Left ventricle myocardium superior (tissue), 1 donor: ENCODE measurements at regions of chr17 and their contacts with region 1.

Region 1: DNA sequence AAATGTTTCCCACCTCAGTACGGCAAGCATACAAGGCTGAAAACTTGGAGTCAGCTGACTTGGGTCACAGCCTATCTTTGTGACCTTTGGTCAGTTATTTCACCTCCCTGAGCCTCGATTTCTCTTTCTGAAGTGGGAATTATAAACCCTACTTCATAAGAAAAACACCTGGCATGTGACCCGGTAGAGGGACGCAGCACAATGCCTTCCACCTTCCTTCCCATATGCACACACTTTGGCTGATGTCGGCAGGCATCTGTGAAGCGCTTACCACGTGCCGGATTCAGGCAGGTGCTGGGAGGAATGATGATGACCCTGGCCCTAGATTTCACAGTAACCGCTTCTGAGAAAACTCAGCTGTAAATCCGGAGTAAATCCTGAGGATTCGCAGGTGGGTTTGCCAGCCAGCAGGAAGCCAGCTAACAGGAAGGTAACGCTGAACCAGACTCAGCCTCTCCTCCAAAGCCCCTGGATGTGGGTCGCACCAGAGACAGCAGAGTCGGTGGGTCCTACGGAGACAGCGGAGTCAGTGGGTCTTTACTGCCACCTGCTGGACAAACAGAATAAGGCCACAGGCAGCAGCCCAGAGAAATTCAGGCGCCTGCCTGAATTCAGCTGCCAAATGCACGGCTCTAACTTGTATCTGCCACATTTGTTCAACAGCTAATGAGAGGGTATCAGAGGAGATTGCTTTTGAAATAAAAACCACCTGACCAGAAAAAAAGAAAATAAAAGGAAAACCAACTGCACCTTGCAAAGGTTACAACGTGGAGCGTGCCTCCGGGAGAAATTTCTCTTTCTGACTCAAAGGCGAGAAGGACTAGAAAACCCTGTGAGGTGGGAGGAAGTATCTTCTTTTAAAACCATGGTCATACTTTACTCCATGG is 16.6 kb downstream of the COPRS start:
- DNase-seq: peak; percentile 64
- ATAC-seq: peak; percentile 92

Region 2: DNA sequence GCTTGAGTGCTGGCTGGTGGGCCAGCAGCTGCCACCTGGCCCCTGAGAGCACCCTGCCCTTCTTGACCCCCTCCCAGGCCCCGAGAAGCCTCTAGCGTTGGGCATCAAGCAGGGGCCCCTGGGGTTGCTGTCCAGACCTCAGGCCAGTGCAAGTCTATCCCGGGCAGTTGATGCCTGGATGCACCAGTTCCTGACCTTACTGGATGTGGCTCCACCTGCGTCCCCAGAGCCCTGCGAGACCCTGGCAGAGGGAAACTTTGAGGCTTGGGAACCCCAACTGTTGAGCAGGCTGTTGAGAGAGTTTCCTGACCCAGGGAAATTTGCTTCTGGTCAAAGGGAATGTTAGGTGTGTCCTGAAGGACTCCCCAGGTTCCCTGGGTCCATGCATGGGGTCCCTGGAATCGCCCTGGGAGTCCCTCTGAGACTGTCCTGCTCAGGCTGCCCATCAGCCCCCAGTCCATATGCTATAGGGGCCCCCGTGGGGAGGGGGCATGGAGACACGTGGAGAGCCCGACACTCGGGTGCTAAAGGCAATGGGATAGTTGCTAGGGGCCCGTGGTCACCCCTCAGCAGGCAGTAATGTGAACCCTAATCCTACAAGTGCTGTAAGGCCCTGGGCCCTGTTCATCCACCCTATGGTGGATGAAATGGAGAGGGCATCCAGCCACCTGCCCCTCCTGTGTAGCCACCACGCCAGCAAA is 404.6 kb before region 1 on chr17:
- intact Hi-C with region 1: loop called (anchors 5 kb)
- DNase-seq: no peak
- ATAC-seq: no peak

Region 3: GRCh38 chr17:31558748-31559644 is 283.4 kb before region 1 on chr17:
- intact Hi-C with region 1: loop called (anchors 5 kb)
- DNase-seq: peak; percentile 89
- ATAC-seq: peak; percentile 95

Region 4: GRCh38 chr17:31967648-31968047 is 125.2 kb after region 1 on chr17:
- intact Hi-C with region 1: no loop called
- DNase-seq: no peak
- ATAC-seq: no peak